Activated CD4-positive, alpha-beta memory T cell treated with anti-CD3 and anti-CD28 coated beads, Interleukin-2, amount 10 ng/mL, durations not matched to agents 7 days and 5 days (primary cell): ENCODE measurements at regions of chr14 and their contacts with region 1.

Region 1: GRCh38 chr14:52043690-52044089 is 25.2 kb downstream of the NID2 start:
- DNase-seq: peak; percentile 35
- H3K4me3 Mint-ChIP-seq: no peak overlapping the region
- H3K27ac Mint-ChIP-seq: no peak overlapping the region
- H3K4me1 Mint-ChIP-seq: peaks cover 2% of the 10 kb centered on the region
- H3K27me3 Mint-ChIP-seq: peaks cover 2% of the 10 kb centered on the region

Region 2: GRCh38 chr14:52060080-52060479 is 16.4 kb after region 1 on chr14:
- CTCF ChIA-PET with region 1: no interaction called
- POLR2A ChIA-PET with region 1: no interaction called
- DNase-seq: no peak
- H3K4me3 Mint-ChIP-seq: no peak overlapping the region
- H3K27ac Mint-ChIP-seq: no peak overlapping the region
- H3K4me1 Mint-ChIP-seq: no peaks in the 10 kb centered on the region
- H3K27me3 Mint-ChIP-seq: peaks cover 40% of the 10 kb centered on the region

Region 3: DNA sequence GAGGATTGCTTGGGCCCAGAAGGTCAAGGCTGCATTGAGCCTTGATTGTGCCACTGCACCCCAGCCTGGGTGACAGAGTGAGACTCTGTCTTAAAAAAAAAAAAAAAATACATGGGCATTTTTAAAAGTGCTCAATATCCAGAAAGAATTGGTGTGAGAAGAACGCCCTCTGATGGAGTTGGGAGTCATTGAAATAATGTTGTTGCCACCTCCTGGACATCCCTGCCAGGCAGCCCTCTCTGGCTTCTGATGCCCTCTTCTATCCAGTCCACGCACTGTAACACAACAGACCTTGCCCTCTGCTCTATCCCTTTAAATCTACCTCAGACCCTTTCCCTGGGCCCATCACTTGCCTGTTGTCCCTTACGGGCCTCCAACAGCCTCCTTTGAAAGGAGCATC is 228.7 kb after region 1 on chr14:
- CTCF ChIA-PET with region 1: interaction called, 11 read pairs
- POLR2A ChIA-PET with region 1: no interaction called
- DNase-seq: peak; percentile 23
- H3K4me3 Mint-ChIP-seq: no peak overlapping the region
- H3K27ac Mint-ChIP-seq: no peak overlapping the region
- H3K4me1 Mint-ChIP-seq: peaks cover 21% of the 10 kb centered on the region
- H3K27me3 Mint-ChIP-seq: peaks cover 49% of the 10 kb centered on the region